Tibial artery (tissue), 4 donors: ENCODE measurements at regions of chr1 and their contacts with region 1.

Region 1: GRCh38 chr1:31368611-31369107 is 4.2 kb downstream of the FABP3 start:
- DNase-seq: no peak
- H3K4me3 ChIP-seq: no peak overlapping the region
- H3K27ac ChIP-seq: peak overlapping the region; percentile 81 to 92
- H3K4me1 ChIP-seq: peaks cover 6 to 63% (median 40%) of the 10 kb centered on the region in 4 donors
- H3K27me3 ChIP-seq: no peaks in the 10 kb centered on the region
- CTCF ChIP-seq: no peak

Region 2: GRCh38 chr1:31306278-31306677 is 62.4 kb before region 1 on chr1:
- intact Hi-C with region 1: loop called (anchors 10 kb)
- DNase-seq: no peak
- H3K4me3 ChIP-seq: no peak overlapping the region
- H3K27ac ChIP-seq: no peak overlapping the region
- H3K4me1 ChIP-seq: no peaks in the 10 kb centered on the region
- H3K27me3 ChIP-seq: no peaks in the 10 kb centered on the region
- CTCF ChIP-seq: no peak

Region 3: DNA sequence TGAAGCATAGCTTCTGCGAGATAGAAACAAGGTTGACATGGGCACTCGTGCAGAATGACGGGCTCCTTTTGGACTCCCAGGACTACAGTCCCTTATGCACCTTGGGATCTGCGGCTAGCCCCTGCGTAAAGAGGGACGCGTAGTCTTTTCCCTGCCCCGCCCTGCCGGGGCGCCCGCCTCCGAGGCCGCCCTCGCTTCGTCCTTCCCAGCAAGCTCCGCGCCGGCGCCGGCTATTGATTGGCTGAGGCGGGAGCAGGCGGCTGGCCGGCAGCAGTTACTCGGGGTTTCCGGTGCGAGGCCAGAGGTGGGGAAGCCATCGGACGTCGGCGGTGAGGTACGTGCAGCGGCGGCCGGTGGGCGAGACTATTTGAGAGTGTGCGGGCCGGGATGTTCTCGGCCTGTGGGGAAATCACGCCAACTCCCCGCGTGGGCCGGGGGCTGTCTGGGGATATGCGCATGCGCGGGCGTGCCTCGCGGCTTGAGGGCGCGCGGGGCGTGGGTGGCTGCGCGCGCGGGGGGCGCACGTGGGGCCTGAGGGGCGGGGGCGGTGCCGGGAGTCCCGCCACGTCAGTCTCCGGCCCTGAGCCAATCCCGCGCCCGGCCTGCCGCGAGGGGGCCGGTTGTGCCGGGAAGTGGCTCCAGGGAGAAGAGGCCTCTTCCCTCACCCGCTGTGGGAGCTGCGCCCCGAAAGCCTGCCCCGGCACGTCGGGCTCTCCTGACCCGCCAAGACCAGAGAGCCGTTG is 811.0 kb after region 1 on chr1 and contains the start of gene TXLNA:
- intact Hi-C with region 1: no loop called
- DNase-seq: peak; percentile 96 to 97
- H3K4me3 ChIP-seq: peak within 1 kb of the TSS; percentile 64 to 81
- H3K27ac ChIP-seq: peak within 1 kb of the TSS; percentile 90 to 93
- H3K4me1 ChIP-seq: peaks cover 0 to 49% (median 38%) of the 10 kb centered on the region in 4 donors
- H3K27me3 ChIP-seq: no peaks in the 10 kb centered on the region
- CTCF ChIP-seq: no peak